PC-9 (cell line): ENCODE measurements at regions of chr14 and their contacts with region 1.

Region 1: DNA sequence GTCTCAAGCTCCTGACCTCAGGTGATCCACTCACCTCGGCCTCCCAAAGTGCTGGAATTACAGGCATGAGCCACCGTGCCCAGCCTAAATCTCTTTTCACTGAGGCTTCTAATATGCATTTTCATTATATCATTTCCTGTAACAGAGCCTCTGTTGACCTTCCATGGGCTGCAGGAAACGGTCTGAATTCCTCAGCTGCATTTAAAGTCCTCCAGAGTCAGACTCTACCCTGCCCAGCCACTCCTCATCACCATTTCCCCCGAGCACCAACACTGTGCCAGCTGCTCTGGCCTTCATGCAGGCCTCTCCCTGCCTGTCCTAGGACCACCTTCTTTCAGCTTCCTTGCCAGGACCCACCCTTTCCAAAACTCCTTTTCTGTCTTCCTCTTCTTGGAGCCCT is 9.8 kb upstream of the NFKBIA start:
- DNase-seq: no peak
- H3K4me3 ChIP-seq: no peak overlapping the region
- H3K27ac ChIP-seq: no peak overlapping the region
- H3K4me1 ChIP-seq: no peaks in the 10 kb centered on the region
- H3K27me3 ChIP-seq: no peaks in the 10 kb centered on the region
- CTCF ChIP-seq: no peak

Region 2: GRCh38 chr14:34671716-34672115 is 742.6 kb before region 1 on chr14:
- CTCF ChIA-PET with region 1: no interaction called
- POLR2A ChIA-PET with region 1: no interaction called
- intact Hi-C with region 1: loop called (anchors 2 kb)
- DNase-seq: no peak
- H3K4me3 ChIP-seq: no peak overlapping the region
- H3K27ac ChIP-seq: no peak overlapping the region
- H3K4me1 ChIP-seq: peaks cover 3% of the 10 kb centered on the region
- H3K27me3 ChIP-seq: no peaks in the 10 kb centered on the region
- CTCF ChIP-seq: no peak

Region 3: GRCh38 chr14:35215110-35215876 is 199.1 kb before region 1 on chr14:
- CTCF ChIA-PET with region 1: no interaction called
- POLR2A ChIA-PET with region 1: no interaction called
- intact Hi-C with region 1: loop called (anchors 1 kb)
- DNase-seq: no peak
- H3K4me3 ChIP-seq: no peak overlapping the region
- H3K27ac ChIP-seq: no peak overlapping the region
- H3K4me1 ChIP-seq: peaks cover 10% of the 10 kb centered on the region
- H3K27me3 ChIP-seq: no peaks in the 10 kb centered on the region
- CTCF ChIP-seq: peak; percentile 49; the same call in 1 of the 2 replicates